ENCODE measurements at regions of chr4 and their contacts with region 1.

Region 1: DNA sequence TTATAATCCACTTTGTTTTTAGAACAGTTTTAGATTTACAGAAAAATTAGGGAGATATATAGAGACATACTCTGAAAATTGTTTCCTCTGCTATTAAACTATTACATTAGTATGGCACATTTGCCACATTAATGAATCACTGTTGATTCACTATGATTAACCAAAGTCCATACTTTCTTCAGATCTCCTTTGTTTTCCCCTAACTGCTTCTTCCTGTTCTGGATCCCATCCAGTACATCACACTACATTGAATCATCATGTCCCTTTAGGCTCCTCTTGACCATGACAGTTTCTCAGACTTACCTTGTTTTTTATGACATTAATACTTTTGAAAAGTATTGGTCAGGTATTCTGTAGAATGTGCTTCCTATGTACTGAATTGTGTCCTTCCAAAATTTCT is 109.2 kb upstream of the EDNRA start:
- DNase-seq: peak; percentile 91
- ATAC-seq: peak; percentile 88
- H3K4me3 ChIP-seq: no peak overlapping the region
- H3K27ac ChIP-seq: peak overlapping the region; percentile 94
- H3K4me1 ChIP-seq: peaks cover 24% of the 10 kb centered on the region
- H3K27me3 ChIP-seq: no peaks in the 10 kb centered on the region
- CTCF ChIP-seq: no peak

Region 2: DNA sequence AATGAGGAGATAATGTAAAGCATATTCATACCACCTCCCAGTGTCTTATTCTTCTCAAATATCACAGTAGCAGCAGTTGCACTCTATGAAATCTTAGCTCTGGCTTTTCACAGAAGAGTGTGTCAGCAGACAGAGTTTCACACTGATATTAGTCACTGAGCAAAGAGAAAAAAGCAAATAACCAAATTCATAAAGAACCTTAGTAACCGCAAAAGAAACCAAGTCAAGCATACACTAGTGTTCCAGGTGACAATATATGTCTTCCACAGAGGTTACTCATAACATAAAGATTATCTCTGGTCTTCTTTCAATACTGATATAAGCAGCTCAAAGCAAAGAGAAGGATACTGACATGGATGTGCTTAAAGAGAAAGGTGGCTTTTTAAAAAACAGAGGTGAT is 72.5 kb before region 1 on chr4:
- CTCF ChIA-PET with region 1: no interaction called
- POLR2A ChIA-PET with region 1: no interaction called
- intact Hi-C with region 1: loop called (anchors 2 kb)
- DNase-seq: peak; percentile 85
- ATAC-seq: peak; percentile 94
- H3K4me3 ChIP-seq: no peak overlapping the region
- H3K27ac ChIP-seq: peak overlapping the region; percentile 78
- H3K4me1 ChIP-seq: peaks cover 19% of the 10 kb centered on the region
- H3K27me3 ChIP-seq: no peaks in the 10 kb centered on the region
- CTCF ChIP-seq: no peak

Region 3: GRCh38 chr4:147334478-147334877 is 37.2 kb before region 1 on chr4:
- CTCF ChIA-PET with region 1: no interaction called
- POLR2A ChIA-PET with region 1: no interaction called
- intact Hi-C with region 1: loop called (anchors 2 kb)
- DNase-seq: peak; percentile 73
- ATAC-seq: peak; percentile 96
- H3K4me3 ChIP-seq: no peak overlapping the region
- H3K27ac ChIP-seq: peak overlapping the region; percentile 59
- H3K4me1 ChIP-seq: peaks cover 14% of the 10 kb centered on the region; the same call in 1 of the 2 replicates
- H3K27me3 ChIP-seq: no peaks in the 10 kb centered on the region
- CTCF ChIP-seq: no peak

Region 4: GRCh38 chr4:147428583-147428982 is 56.9 kb after region 1 on chr4:
- CTCF ChIA-PET with region 1: no interaction called
- POLR2A ChIA-PET with region 1: no interaction called
- intact Hi-C with region 1: loop called (anchors 2 kb)
- DNase-seq: peak; percentile 68
- ATAC-seq: peak; percentile 96
- H3K4me3 ChIP-seq: no peak overlapping the region
- H3K27ac ChIP-seq: peak overlapping the region; percentile 58
- H3K4me1 ChIP-seq: peaks cover 13% of the 10 kb centered on the region
- H3K27me3 ChIP-seq: no peaks in the 10 kb centered on the region
- CTCF ChIP-seq: no peak

Measured in PC-3 (cell line).